Activated naive CD8-positive, alpha-beta T cell treated with anti-CD3 and anti-CD28 coated beads, Interleukin-2, amount 10 ng/mL, durations not matched to agents 7 days and 5 days (primary cell): ENCODE measurements at regions of chr14 and their contacts with region 1.

Region 1: GRCh38 chr14:55051426-55052268 is at the start of gene MAPK1IP1L:
- DNase-seq: peak; percentile 98
- ATAC-seq: peak; percentile 96
- H3K4me3 Mint-ChIP-seq: peak within 1 kb of the TSS; percentile 89
- H3K27ac Mint-ChIP-seq: peak within 1 kb of the TSS; percentile 91
- H3K4me1 Mint-ChIP-seq: peaks cover 27% of the 10 kb centered on the region
- H3K27me3 Mint-ChIP-seq: no peaks in the 10 kb centered on the region
- total RNA-seq, gene MAPK1IP1L: 87.1 to 87.3 TPM

Region 2: GRCh38 chr14:54942913-54943312 is 108.7 kb before region 1 on chr14:
- POLR2A ChIA-PET with region 1: no interaction called
- DNase-seq: no peak
- ATAC-seq: no peak
- H3K4me3 Mint-ChIP-seq: no peak overlapping the region
- H3K27ac Mint-ChIP-seq: no peak overlapping the region
- H3K4me1 Mint-ChIP-seq: peaks cover 3% of the 10 kb centered on the region
- H3K27me3 Mint-ChIP-seq: no peaks in the 10 kb centered on the region

Region 3: GRCh38 chr14:55026793-55027561 is 24.7 kb before region 1 on chr14 and contains the starts of genes SOCS4 and WDHD1:
- POLR2A ChIA-PET with region 1: interaction called, 38 read pairs
- DNase-seq: peak; percentile 99
- ATAC-seq: peak; percentile 94
- H3K4me3 Mint-ChIP-seq: peak within 1 kb of the TSS; percentile 92
- H3K27ac Mint-ChIP-seq: peak within 1 kb of the TSS; percentile 91
- H3K4me1 Mint-ChIP-seq: peaks cover 38% of the 10 kb centered on the region
- H3K27me3 Mint-ChIP-seq: no peaks in the 10 kb centered on the region
- total RNA-seq, gene SOCS4: 25.8 to 31.6 TPM
- total RNA-seq, gene WDHD1: 35.1 to 37.9 TPM

Region 4: DNA sequence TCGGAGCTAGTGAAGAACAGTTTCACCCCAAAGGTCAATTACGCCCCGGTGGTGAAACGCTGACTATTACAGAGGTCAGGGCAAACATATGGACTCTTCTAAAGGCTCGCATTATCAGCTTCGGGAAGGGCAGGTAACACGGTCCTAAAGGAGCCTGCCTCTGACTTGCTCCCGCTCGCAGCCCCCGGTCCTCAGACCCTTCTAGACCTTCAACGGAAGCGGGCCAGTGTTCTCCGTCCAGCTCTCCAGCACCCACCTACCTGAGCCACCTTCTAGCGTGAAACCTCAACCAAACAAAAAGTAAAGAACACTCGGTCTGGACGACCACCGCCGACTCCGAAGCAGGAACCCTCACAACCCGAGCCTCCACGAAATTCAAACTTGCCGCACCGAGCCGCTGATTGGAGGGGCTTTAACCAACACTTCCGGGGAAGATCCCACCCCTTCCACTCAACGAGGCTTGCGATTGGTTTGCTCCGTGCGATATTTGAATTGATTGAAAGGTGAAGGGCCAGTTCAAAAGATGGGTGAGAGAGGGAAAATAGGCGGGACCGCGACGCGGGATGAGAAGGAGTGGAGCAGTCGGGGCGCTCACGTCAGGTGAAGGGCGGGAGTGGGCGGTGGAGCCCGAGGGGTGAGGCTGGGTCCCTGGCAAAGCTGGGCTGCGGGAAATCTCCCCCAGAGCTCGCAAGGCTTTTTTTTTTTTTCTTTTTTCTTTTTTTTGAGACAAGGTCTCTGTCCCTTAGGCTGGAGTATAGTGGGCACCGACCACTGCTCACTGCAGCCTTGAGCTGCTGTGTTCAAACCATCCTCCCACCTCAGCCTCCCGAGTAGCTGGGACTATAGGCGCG is 139.8 kb after region 1 on chr14 and contains the start of gene DLGAP5:
- POLR2A ChIA-PET with region 1: interaction called, 14 read pairs
- DNase-seq: peak; percentile 86
- ATAC-seq: peak; percentile 98
- H3K4me3 Mint-ChIP-seq: peak within 1 kb of the TSS; percentile 97
- H3K27ac Mint-ChIP-seq: peak within 1 kb of the TSS; percentile 92
- H3K4me1 Mint-ChIP-seq: peaks cover 26% of the 10 kb centered on the region
- H3K27me3 Mint-ChIP-seq: peaks cover 4% of the 10 kb centered on the region
- total RNA-seq, gene DLGAP5: 79.7 to 84.8 TPM

Region 5: DNA sequence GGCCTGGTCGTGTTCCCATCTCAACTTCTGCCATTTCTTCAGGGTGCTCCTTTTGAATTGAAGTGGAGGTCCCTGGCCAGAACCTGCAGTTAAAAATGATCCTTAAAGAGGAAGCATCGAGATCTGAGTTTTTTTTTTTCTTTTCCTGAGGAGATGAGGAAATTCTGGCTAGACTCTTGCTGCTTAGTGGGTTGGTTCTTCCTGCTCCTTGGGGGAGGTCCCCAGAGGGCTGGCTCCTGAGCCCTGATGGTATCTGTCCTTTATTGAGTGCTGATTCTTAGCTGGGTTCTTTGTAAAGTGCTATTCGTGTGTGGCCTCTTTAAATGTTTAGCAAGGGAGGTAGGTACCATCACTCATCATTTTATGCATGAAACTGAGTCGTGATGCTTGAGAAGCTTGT is 1078.3 kb after region 1 on chr14:
- POLR2A ChIA-PET with region 1: no interaction called
- DNase-seq: no peak
- ATAC-seq: no peak
- H3K4me3 Mint-ChIP-seq: no peak overlapping the region
- H3K27ac Mint-ChIP-seq: no peak overlapping the region
- H3K4me1 Mint-ChIP-seq: peaks cover 3% of the 10 kb centered on the region
- H3K27me3 Mint-ChIP-seq: peaks cover 7% of the 10 kb centered on the region